Posterior vena cava (tissue), 2 donors: ENCODE measurements at regions of chr7 and their contacts with region 1.

Region 1: DNA sequence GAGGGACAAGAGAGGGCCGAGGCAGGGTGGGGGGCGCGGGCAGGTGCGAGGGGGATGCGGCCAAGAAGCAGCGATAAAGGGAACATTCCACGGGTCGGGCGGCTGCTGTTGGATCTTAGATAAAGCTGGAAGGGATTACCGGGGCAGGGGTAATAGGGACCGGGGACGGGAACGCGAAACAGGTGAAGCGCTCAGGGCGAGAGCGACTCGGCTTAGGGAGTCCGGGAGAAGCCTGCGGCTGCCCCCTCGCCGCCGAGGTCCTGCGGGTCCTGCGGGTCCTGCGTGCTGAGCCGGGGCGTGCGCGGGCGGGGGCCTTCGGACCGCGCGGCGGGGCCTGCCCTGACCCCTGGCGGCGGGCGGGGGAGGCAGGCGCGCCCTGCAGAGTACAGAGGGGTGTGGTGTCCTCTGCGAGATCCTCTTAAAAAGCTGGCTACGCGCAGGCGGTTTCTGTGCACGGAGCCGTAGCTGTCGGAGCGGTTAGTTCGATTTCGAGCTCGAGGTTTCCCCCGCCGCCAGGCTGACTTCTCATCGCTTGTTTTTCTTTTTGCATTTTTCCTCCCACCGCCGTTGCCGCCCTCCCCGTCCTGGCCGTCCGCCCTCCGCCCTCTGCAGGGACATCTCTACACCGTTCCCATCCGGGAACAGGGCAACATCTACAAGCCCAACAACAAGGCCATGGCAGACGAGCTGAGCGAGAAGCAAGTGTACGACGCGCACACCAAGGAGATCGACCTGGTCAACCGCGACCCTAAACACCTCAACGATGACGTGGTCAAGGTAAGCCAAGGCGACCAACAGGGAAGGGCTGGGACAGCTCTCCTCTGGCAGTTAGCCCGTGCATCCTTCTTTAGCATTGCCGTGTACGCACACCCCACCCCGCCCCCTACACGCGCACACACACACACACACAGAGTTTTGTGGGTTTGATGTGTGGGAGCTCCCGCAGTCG is 1.4 kb downstream of the CAV1 start:
- DNase-seq: peak; percentile 94

Region 2: GRCh38 chr7:116258734-116259133 is 267.5 kb before region 1 on chr7:
- intact Hi-C with region 1: loop called (anchors 5 to 10 kb)
- DNase-seq: no peak

Region 3: GRCh38 chr7:116354546-116355408 is 171.4 kb before region 1 on chr7:
- intact Hi-C with region 1: loop called in 1 of 2 experiments (anchors 10 kb)
- DNase-seq: peak; percentile 86

Region 4: GRCh38 chr7:116499168-116500077 is 26.8 kb before region 1 on chr7 and contains the start of gene CAV2:
- intact Hi-C with region 1: loop called in 1 of 2 experiments (anchors 2 kb)
- DNase-seq: peak; percentile 90
- total RNA-seq, gene CAV2: 81.9 to 102 TPM

Region 5: GRCh38 chr7:116511552-116512519 is 14.4 kb before region 1 on chr7:
- intact Hi-C with region 1: no loop called
- DNase-seq: no peak

Region 6: DNA sequence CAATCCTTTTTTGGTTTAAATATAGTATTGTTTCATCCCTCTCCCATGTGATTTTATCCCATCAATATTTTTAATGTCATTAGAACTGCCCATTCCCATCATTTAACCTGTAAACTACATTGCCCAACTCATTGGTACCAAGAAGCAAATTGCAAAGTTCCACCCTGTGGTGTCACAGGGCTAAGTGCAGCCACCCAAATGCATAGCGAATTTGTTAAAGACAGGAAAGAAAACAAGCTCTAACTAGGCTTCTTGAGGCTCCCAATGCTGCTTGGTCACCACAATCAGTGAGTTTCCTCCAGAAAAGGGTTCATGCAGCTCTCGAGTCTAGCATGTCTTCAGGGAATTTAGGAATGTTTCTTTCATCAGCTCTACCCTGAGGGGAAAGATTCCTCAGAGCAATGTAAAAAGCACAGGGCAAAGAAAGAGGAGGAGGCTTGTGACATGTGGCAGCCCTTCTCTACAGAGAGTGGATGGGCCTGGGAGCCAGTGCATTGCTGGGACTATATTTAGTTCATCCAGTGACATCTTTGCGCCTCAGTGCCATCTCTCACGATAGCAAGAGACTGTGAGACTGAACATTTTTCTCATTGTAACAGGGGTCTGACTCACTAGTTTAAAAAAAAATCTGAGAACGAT is 56.7 kb after region 1 on chr7:
- intact Hi-C with region 1: loop called (anchors 2 to 10 kb)
- DNase-seq: peak; percentile 78